Dendritic cell treated with granulocyte-macrophage colony-stimulating factor and Interleukin-4, amounts not matched to agents 40 ng/mL and 50 ng/mL, for 4 days (primary cell): ENCODE measurements at regions of chr2 and their contacts with region 1.

Region 1: GRCh38 chr2:187138265-187138664 is 289.3 kb upstream of the ZSWIM2 start:
- H3K4me3 Mint-ChIP-seq: no peak overlapping the region
- H3K27ac Mint-ChIP-seq: no peak overlapping the region
- H3K4me1 Mint-ChIP-seq: no peaks in the 10 kb centered on the region
- H3K27me3 Mint-ChIP-seq: no peaks in the 10 kb centered on the region

Region 2: DNA sequence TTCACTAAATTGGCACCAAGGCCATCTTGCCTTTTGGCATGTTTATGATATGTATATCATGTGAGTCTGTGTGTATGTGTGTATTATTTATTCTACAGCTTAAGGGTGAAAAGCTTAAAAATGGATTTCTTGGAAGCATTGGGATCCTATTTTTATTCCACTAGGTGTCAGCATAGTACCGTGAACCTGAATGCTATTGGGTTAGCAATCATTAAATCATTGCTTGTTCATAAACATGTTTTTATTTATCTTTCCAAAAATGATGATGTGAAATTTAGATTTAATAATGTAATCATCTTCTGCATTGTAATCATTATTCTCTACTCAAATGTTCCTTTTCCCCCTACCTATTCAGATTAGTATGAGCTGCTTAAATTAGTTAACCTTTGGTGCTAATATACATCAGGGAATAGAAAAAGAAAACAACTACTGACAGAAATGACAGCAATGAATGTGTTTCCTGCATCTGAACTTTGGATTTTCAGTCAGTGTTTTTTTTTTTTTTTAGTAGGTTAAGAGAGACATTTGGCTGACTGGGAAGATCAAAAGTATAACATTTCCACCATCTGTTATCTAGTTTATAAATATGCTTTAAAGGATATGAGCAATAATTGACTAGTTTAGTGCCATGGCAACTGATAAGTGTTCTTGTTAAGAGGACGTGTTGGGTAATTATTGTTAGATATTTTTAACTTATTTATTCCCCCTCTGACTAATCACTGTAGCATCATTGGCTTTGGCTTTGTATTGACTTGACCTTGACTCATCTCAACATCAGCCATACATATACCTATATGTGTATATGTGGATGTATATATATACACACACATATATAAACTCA is 275.2 kb before region 1 on chr2:
- intact Hi-C with region 1: loop called (anchors 5 kb)
- H3K4me3 Mint-ChIP-seq: no peak overlapping the region
- H3K27ac Mint-ChIP-seq: no peak overlapping the region
- H3K4me1 Mint-ChIP-seq: no peaks in the 10 kb centered on the region
- H3K27me3 Mint-ChIP-seq: no peaks in the 10 kb centered on the region

Region 3: GRCh38 chr2:187299122-187299906 is 161.0 kb after region 1 on chr2:
- intact Hi-C with region 1: loop called (anchors 10 kb)
- H3K4me3 Mint-ChIP-seq: no peak overlapping the region
- H3K27ac Mint-ChIP-seq: peak overlapping the region; percentile 5
- H3K4me1 Mint-ChIP-seq: peaks cover 9% of the 10 kb centered on the region
- H3K27me3 Mint-ChIP-seq: no peaks in the 10 kb centered on the region